CD14-positive monocyte (primary cell): ENCODE measurements at regions of chr7 and their contacts with region 1.

Region 1: GRCh38 chr7:24819916-24820689 is 62.8 kb upstream of the GSDME start:
- DNase-seq: peak; percentile 71 to 84 (median 81)
- H3K4me3 ChIP-seq: peak overlapping the region in 1 of 3 experiments; percentile 33
- H3K4me3 Mint-ChIP-seq: peak overlapping the region; percentile 55 to 69
- H3K27ac ChIP-seq: peak overlapping the region in 1 of 2 donors; percentile 93
- H3K27ac Mint-ChIP-seq: peak overlapping the region; percentile 89 to 98 (median 97)
- H3K4me1 ChIP-seq: peaks cover 22 to 25% of the 10 kb centered on the region in 2 donors
- H3K4me1 Mint-ChIP-seq: peaks cover 29% of the 10 kb centered on the region
- H3K27me3 ChIP-seq: no peaks in the 10 kb centered on the region
- H3K27me3 Mint-ChIP-seq: no peaks in the 10 kb centered on the region
- CTCF ChIP-seq: peak; percentile 90

Region 2: DNA sequence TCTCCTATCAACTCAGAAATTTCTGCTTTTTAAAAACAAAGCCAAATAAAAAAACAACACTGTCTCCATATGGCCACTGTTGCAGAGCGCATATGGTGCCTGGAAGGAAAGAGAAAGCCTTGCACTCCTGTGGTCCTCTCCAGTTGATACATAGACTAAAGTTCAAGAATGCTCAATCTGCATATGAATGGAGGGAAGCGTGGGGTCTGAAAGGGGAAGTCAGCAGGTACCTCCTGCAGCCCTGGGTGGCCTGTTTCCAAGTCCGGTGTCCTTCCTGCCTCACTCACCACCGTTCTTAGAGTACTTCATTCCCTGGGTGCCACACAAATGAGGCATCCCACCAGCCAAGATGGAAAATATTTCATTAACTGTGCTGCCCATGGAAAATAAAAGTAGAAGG is 385.1 kb before region 1 on chr7:
- intact Hi-C with region 1: no loop called
- DNase-seq: no peak
- H3K4me3 ChIP-seq: no peak overlapping the region
- H3K4me3 Mint-ChIP-seq: no peak overlapping the region
- H3K27ac ChIP-seq: no peak overlapping the region
- H3K27ac Mint-ChIP-seq: no peak overlapping the region
- H3K4me1 ChIP-seq: no peaks in the 10 kb centered on the region
- H3K4me1 Mint-ChIP-seq: no peaks in the 10 kb centered on the region
- H3K27me3 ChIP-seq: no peaks in the 10 kb centered on the region
- H3K27me3 Mint-ChIP-seq: peaks cover 0 to 2% (median 0%) of the 10 kb centered on the region in 3 donors
- CTCF ChIP-seq: no peak

Region 3: GRCh38 chr7:24836084-24836483 is 16.0 kb after region 1 on chr7:
- intact Hi-C with region 1: loop called in 1 of 2 experiments (anchors 1 kb)
- DNase-seq: peak; percentile 33 to 60 (median 56)
- H3K4me3 ChIP-seq: no peak overlapping the region
- H3K4me3 Mint-ChIP-seq: peak overlapping the region in 1 of 2 donors; percentile 11
- H3K27ac ChIP-seq: peak overlapping the region in 1 of 2 donors; percentile 32
- H3K27ac Mint-ChIP-seq: peak overlapping the region in 1 of 7 donors; percentile 35
- H3K4me1 ChIP-seq: peaks cover 47 to 50% of the 10 kb centered on the region in 2 donors
- H3K4me1 Mint-ChIP-seq: peaks cover 51% of the 10 kb centered on the region
- H3K27me3 ChIP-seq: no peaks in the 10 kb centered on the region
- H3K27me3 Mint-ChIP-seq: no peaks in the 10 kb centered on the region
- CTCF ChIP-seq: no peak

Region 4: DNA sequence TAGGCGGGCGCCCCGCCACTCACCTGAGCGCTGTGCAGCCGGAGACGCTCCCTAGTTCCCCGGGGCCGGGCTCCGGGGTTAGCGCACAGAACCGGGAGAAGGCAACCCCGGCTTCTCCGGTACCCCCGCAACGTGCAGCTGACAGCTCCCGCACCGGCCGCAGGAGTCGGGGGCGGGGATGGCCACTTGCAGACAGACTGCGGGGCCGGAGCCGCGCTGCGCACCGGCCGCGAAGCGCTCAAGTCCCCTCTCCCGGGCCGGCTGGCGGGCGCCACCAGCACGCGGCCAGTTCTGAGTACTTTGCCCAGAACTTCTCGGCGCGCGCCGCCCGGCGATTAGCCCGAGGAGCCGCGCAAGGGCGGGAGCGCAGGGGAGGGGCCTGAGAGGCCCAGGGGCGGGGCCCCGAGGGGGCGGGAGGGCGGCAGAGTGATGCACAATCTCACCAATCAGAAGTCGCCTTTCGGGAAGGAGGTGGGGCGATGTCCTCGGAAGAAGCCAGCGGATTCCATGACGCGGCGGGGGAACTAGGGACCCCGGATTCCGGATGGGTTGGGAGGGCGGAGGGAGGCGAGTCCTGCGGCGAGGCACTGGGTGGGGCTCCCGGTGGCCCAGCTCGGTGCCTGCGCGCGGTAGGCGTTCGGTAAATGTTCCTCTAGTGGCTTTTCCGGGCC is 159.9 kb after region 1 on chr7 and contains the start of gene OSBPL3:
- intact Hi-C with region 1: loop called in 1 of 2 experiments (anchors 5 kb)
- DNase-seq: peak; percentile 92 to 96 (median 93)
- H3K4me3 ChIP-seq: peak within 1 kb of the TSS; percentile 87 to 94 (median 93)
- H3K4me3 Mint-ChIP-seq: peak within 1 kb of the TSS; percentile 98 to 99
- H3K27ac ChIP-seq: peak within 1 kb of the TSS; percentile 69 to 93
- H3K27ac Mint-ChIP-seq: peak within 1 kb of the TSS; percentile 90 to 97 (median 95)
- H3K4me1 ChIP-seq: peaks cover 34 to 51% of the 10 kb centered on the region in 2 donors
- H3K4me1 Mint-ChIP-seq: peaks cover 46% of the 10 kb centered on the region
- H3K27me3 ChIP-seq: peaks cover 4 to 11% of the 10 kb centered on the region in 2 donors
- H3K27me3 Mint-ChIP-seq: peaks cover 14 to 25% (median 14%) of the 10 kb centered on the region in 3 donors
- CTCF ChIP-seq: peak; percentile 32
- polyA plus RNA-seq, gene OSBPL3: 2.6 to 9.2 (median 3.7) TPM

Region 5: DNA sequence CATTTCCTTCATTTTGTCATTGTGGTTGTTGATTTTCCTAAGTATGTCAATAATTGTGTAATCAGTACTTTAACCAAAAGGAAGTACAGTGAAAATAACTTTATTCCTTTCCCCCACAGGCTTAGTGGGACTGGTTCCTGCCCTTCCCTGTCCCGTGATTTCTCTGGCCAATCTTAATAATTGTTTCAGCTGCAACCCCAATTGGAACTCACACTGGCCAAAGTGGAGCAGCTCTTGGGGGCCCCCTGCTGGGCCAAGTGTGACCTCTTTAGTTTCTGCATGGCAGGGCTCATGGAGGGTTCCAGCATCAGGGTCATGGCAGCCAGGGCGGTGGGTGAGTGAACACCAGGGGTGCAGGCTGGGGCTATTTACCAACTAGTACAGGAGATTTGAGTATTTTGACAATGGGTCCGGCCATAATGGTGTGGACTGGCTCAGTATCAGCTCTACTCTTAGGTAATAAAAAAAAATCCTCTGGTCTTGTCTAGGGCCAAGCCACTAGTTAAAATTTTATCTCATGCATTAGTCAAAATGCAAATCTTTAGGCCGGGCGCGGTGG is 273.2 kb after region 1 on chr7:
- intact Hi-C with region 1: loop called in 1 of 2 experiments (anchors 5 kb)
- DNase-seq: peak; percentile 50 to 72 (median 65)
- H3K4me3 ChIP-seq: no peak overlapping the region
- H3K4me3 Mint-ChIP-seq: no peak overlapping the region
- H3K27ac ChIP-seq: no peak overlapping the region
- H3K27ac Mint-ChIP-seq: no peak overlapping the region
- H3K4me1 ChIP-seq: peaks cover 13% of the 10 kb centered on the region in 2 donors
- H3K4me1 Mint-ChIP-seq: peaks cover 13% of the 10 kb centered on the region
- H3K27me3 ChIP-seq: no peaks in the 10 kb centered on the region
- H3K27me3 Mint-ChIP-seq: peaks cover 1 to 6% (median 3%) of the 10 kb centered on the region in 3 donors
- CTCF ChIP-seq: peak; percentile 69